MCF 10A (cell line): ENCODE measurements at regions of chr17 and their contacts with region 1.

Region 1: DNA sequence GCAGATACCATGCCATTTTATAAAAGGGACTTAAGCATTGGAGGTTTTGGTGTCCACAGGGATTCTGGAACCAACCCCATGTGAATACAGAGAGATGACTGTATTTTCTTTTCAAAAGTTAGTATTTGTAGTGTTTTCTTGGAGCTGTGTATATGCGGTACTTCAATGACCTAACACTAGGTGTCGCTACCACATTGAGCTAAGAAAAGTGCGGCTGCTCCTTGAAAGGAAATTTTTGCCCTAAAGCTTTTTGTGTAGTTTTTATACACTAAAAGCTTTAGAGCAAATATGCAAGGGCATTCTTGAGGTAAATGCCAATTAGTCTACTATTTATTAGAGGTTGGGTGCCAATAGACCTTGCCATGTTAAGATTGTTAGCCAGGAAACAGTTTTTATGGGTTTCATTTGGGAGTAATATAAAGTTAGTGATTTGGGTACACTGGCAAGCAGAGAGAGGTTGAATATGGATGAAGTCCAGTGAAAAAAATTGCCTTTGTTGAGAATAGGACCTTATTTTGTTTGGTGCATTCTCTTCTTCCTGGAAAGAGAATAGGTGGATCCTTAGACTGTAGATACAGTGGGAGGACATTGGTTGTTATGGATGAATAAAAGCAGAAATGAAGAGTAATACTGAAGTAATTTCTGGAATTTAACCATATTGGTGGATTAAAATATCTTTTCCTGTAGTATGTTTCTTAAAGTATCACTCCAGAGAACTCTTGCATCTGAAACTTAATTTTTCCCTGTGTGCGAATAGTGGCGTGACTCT is 43.3 kb downstream of the BCAS3 start:
- DNase-seq: peak; percentile 62
- H3K4me3 Mint-ChIP-seq: no peak overlapping the region
- H3K27ac Mint-ChIP-seq: no peak overlapping the region
- H3K4me1 Mint-ChIP-seq: peaks cover 5% of the 10 kb centered on the region
- H3K27me3 Mint-ChIP-seq: no peaks in the 10 kb centered on the region
- CTCF ChIP-seq: peak; percentile 74

Region 2: GRCh38 chr17:60741031-60741430 is 20.1 kb after region 1 on chr17:
- CTCF ChIA-PET with region 1: interaction called, 13 read pairs
- POLR2A ChIA-PET with region 1: no interaction called
- intact Hi-C with region 1: no loop called
- DNase-seq: no peak
- H3K4me3 Mint-ChIP-seq: no peak overlapping the region
- H3K27ac Mint-ChIP-seq: no peak overlapping the region
- H3K4me1 Mint-ChIP-seq: no peaks in the 10 kb centered on the region
- H3K27me3 Mint-ChIP-seq: no peaks in the 10 kb centered on the region
- CTCF ChIP-seq: no peak

Region 3: GRCh38 chr17:60971515-60972369 is 250.8 kb after region 1 on chr17:
- CTCF ChIA-PET with region 1: no interaction called
- POLR2A ChIA-PET with region 1: no interaction called
- intact Hi-C with region 1: loop called (anchors 1 kb)
- DNase-seq: peak; percentile 53
- H3K4me3 Mint-ChIP-seq: no peak overlapping the region
- H3K27ac Mint-ChIP-seq: no peak overlapping the region
- H3K4me1 Mint-ChIP-seq: no peaks in the 10 kb centered on the region
- H3K27me3 Mint-ChIP-seq: no peaks in the 10 kb centered on the region
- CTCF ChIP-seq: peak; percentile 55

Region 4: DNA sequence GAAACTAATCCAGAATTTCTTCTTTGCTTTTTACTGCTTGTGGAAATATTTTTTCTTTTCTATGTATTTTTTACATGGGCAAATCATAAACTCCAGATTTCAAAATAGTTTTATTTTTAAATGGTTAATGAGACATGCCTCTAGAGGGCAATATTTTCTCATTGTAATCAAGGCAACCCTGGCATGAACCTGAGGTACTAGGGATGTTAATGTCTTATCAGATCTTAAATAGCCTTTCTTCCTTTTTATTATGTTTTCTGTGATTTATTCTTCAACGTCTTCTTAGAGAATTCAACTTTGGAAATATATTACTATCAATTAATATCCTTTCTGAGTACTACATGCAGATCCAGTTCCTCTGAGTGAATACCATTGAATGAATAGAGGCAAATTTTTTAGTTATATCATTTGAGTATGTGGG is 281.4 kb after region 1 on chr17:
- CTCF ChIA-PET with region 1: interaction called, 4 read pairs
- POLR2A ChIA-PET with region 1: interaction called, 3 read pairs
- intact Hi-C with region 1: loop called (anchors 2 kb)
- DNase-seq: peak; percentile 51
- H3K4me3 Mint-ChIP-seq: no peak overlapping the region
- H3K27ac Mint-ChIP-seq: no peak overlapping the region
- H3K4me1 Mint-ChIP-seq: no peaks in the 10 kb centered on the region
- H3K27me3 Mint-ChIP-seq: no peaks in the 10 kb centered on the region
- CTCF ChIP-seq: peak; percentile 56

Region 5: GRCh38 chr17:61389670-61390478 is 668.9 kb after region 1 on chr17:
- CTCF ChIA-PET with region 1: interaction called, 3 read pairs
- POLR2A ChIA-PET with region 1: no interaction called
- intact Hi-C with region 1: loop called (anchors 2 kb)
- DNase-seq: peak; percentile 52
- H3K4me3 Mint-ChIP-seq: no peak overlapping the region
- H3K27ac Mint-ChIP-seq: no peak overlapping the region
- H3K4me1 Mint-ChIP-seq: no peaks in the 10 kb centered on the region
- H3K27me3 Mint-ChIP-seq: no peaks in the 10 kb centered on the region
- CTCF ChIP-seq: peak; percentile 84

Region 6: DNA sequence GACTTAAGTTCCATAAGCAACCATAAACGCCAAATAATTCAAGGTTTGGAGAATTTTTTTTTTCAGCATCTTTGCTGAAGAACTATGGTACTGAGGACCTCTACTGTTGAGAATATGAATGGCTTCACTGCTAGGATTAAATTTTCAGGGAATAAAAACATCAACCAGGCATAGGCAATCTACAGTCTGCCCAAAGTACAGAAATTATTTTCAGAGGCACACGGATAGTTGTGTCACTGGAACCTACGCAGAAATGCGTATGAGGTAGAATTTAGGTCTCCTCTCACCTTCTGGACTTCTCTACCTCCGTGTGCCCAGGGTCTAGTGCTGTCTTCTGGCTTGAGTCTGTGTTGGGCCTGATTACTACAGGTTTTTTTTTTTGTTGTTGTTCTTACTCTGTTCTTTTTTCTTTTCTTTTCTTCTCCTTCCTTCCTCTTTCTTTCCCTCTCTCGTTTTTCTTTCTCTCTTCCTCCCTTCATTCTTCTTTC is 830.4 kb after region 1 on chr17:
- CTCF ChIA-PET with region 1: interaction called, 4 read pairs
- POLR2A ChIA-PET with region 1: no interaction called
- intact Hi-C with region 1: loop called (anchors 10 kb)
- DNase-seq: peak; percentile 54
- H3K4me3 Mint-ChIP-seq: no peak overlapping the region
- H3K27ac Mint-ChIP-seq: no peak overlapping the region
- H3K4me1 Mint-ChIP-seq: no peaks in the 10 kb centered on the region
- H3K27me3 Mint-ChIP-seq: peaks cover 42% of the 10 kb centered on the region
- CTCF ChIP-seq: peak; percentile 66